Dendritic cell treated with granulocyte-macrophage colony-stimulating factor and Interleukin-4, amounts not matched to agents 40 ng/mL and 50 ng/mL, for 4 days (primary cell): ENCODE measurements at regions of chr17 and their contacts with region 1.

Region 1: DNA sequence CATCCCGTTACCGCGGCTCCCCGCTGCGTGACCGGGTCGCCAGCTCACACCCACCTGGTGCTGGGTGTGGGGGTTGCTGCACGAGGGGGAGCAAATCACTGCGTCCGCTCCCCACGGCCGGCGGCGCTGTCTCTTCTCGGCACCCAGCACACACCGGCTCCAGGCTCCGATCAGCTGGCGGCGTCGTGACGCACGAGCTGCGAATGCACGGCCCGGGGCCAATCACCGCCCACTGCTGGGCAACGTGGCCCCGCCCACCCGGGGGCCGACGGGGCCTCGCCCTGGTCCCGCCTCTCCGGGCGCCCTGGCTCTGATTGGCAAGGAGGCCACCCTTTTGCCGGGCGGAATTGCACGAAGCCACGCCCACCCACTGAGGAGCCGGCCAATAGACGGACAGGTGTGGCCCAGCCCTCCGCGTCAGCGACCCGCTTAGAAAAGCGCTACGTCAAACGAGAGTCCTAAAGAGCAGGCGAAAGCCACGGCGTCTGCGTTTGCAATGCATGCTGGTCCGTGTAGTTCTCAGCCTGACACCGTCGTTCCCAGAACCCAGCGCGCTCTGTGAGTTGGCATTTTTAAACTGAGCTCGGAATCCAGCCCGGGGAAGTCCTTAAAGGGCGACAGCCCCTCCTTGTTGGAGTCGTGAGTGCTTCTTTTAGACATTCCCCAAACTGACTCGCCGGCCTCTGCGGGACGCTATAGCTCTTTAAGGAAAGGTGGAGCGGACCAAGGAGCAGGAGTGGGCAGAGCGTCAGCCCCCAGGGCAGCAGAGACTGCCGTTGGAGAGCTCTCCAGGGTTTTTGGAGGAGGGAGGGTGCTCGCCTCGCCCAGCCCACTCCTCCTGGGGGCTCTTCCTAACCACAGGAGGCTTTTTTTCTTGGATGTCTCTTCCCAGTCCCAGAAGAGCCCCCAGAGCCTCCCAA is 6.2 kb upstream of the TLCD2 start:
- H3K4me3 Mint-ChIP-seq: peak overlapping the region; percentile 99
- H3K27ac Mint-ChIP-seq: peak overlapping the region; percentile 99
- H3K4me1 Mint-ChIP-seq: peaks cover 62% of the 10 kb centered on the region
- H3K27me3 Mint-ChIP-seq: no peaks in the 10 kb centered on the region

Region 2: DNA sequence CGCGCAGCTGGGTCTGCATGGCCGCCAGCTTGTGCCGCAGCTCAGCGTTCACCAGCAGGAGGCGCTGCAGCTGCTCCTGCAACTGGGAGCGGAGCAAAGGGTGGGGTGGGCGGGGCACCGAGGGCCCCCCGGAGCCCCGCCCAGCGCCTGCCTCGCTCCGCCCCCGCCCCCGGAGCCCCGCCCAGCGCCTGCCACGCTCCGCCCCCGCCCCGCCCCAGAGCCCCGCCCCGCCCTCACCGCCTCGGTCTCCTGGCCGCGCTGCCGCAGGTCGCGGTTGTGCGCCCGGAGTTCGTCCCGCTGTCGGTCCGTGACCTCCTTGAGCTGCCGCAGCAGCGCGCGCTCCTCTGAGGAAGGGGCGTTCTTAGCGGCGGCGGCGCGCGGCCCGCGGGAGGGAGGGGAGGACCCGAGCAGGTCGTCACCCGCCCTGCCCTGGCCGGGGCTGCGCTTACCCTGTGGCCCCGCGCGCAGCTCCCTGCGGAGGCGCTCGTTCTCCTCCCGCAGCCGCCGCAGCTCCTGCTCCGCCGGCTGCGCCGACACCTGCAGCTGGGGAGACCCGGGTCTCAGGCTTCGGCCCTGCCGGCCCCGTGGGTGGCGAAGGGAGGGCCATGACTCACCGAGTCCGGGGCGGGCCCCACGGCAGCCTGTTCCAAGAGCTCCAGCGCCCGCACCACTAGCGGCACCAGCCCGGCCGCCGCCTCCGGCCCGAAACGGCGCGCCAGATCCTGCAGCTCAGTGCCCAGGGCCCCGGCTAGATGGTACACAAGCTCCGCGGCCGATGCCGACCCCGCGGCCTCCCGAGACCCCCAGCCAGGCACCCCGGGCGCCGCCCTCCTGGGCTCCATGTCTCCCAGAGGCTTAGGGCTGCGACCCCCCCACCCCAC is 67.1 kb before region 1 on chr17:
- intact Hi-C with region 1: loop called (anchors 2 kb)
- H3K4me3 Mint-ChIP-seq: peak overlapping the region; percentile 83
- H3K27ac Mint-ChIP-seq: peak overlapping the region; percentile 90
- H3K4me1 Mint-ChIP-seq: peaks cover 77% of the 10 kb centered on the region
- H3K27me3 Mint-ChIP-seq: no peaks in the 10 kb centered on the region

Region 3: DNA sequence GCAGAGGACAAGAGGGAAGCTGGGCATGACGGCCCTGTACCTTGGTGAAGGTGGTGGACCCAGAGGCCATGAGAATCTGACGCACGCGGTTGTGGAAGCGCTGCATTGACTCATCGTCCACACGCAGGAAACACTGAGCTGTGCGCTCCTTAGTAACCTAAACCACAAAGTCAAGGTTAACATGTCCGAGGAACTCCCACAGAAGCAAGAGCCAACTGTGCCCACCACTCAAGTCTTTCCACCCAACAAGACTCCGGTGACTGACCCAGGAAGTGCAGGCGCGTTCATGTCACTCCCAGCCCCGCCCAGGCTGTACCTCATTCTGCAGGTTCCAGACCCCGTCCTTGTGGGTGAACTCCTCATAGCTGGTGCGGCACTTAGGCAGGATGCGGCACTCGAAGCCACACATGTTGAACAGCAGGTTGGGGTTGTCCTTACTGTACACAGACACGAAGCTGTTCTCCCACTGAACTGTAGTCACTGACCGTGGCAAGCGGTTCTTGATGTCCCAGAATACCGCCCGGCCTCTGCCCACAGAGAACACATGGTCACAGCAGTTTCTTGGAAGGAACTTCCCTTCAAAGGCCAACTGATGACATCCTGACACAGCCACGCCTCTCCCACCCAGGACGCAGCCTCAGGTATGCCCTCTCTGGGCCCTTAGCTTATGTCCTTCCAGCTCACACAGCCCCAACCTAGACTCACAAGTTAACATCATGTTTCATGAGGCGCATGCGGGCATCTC is 43.1 kb before region 1 on chr17:
- intact Hi-C with region 1: loop called (anchors 5 kb)
- H3K4me3 Mint-ChIP-seq: no peak overlapping the region
- H3K27ac Mint-ChIP-seq: peak overlapping the region; percentile 6
- H3K4me1 Mint-ChIP-seq: peaks cover 29% of the 10 kb centered on the region
- H3K27me3 Mint-ChIP-seq: no peaks in the 10 kb centered on the region

Region 4: DNA sequence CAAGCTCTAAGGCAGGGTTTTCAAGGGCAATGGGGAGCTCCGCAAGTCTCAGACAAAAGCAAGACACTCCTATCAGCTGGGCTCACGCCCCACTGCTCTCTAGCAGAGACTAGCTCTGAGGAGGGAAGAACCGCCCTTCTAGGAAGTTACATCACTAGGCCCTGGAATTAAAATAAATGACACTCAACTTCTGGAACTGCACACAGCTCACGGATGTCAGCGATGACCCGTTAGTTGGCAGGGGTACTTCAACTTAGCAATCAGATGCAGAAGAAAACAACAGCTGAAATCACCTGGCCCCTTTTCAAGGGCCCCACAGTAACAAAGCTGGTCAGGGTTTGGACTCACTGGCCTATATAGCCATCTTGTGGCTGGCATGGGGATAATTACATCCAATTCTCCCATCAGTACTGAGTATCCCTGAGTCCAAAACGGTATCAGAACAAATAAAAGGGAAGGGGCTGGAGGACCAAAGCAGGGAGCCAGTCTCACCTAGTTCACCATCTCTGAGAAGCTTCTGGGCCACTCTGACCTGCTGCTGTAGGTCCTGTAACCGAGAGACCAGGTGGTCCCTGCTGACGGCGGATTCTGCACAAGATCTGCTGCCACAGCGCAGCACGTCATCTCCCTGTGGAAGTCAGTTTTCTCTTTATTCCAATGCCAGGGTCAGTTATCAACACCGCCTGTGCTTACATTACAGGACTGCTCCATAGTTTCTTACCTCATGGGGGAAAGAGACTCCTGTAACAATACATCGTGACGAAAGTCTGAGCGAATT is 67.7 kb after region 1 on chr17:
- intact Hi-C with region 1: loop called (anchors 2 kb)
- H3K4me3 Mint-ChIP-seq: peak overlapping the region; percentile 70
- H3K27ac Mint-ChIP-seq: peak overlapping the region; percentile 98
- H3K4me1 Mint-ChIP-seq: peaks cover 50% of the 10 kb centered on the region
- H3K27me3 Mint-ChIP-seq: no peaks in the 10 kb centered on the region

Region 5: GRCh38 chr17:1865252-1866037 is 149.1 kb after region 1 on chr17:
- intact Hi-C with region 1: loop called (anchors 5 kb)
- H3K4me3 Mint-ChIP-seq: no peak overlapping the region
- H3K27ac Mint-ChIP-seq: no peak overlapping the region
- H3K4me1 Mint-ChIP-seq: no peaks in the 10 kb centered on the region
- H3K27me3 Mint-ChIP-seq: no peaks in the 10 kb centered on the region